HepG2 (cell line): ENCODE measurements at regions of chr21 and their contacts with region 1.

Region 1: GRCh38 chr21:34510148-34511142 is 1.6 kb downstream of the KCNE1 start:
- DNase-seq: peak; percentile 67
- ATAC-seq: peak; percentile 98
- H3K4me3 ChIP-seq: no peak overlapping the region
- H3K27ac ChIP-seq: no peak overlapping the region
- H3K4me1 ChIP-seq: peaks cover 6% of the 10 kb centered on the region; the same call in 1 of the 2 replicates
- H3K27me3 ChIP-seq: peaks cover 0 to 5% of the 10 kb centered on the region in 2 experiments; a peak in 1 of 5 replicates
- CTCF ChIP-seq: peak; percentile 99
- EP300 ChIP-seq: no peak
- POLR2A ChIP-seq: no peak
- RAD21 ChIP-seq: peak; percentile 96

Region 2: DNA sequence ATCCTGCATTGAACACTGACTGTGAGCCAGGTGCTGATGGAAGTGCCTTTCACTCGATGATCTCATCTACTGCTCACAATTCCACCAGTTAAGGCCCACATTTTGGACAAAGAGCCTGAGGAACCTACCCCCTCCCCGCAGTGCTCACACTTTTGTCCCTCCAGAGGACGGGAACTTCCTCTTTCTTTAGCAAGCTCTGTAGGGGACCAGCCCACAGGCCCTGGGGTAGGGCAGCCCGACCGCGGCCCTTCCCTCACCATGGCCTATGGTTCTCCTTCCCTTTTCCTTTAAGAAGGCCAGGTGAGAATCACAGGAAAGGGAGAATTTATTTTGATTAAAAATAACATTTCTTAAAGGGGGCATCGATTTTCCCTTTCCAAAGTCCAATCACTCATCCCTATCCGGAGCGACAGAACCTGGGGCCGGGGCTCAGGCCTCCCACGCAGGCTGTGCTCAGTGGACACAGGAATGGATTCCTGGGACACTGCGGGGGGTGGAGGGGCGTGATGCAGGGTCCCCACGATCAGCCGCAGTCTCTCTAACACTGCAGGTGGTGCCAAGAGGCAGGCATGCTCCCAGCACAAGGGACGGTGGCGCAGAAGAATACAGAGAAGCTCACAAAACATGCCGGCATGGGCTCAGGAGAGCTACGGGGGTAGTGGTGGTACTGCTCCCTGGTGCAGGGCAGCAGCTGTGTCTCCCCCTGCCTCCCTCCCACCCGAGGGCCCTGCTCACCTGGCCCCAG is 10.5 kb after region 1 on chr21:
- CTCF ChIA-PET with region 1: no interaction called
- POLR2A ChIA-PET with region 1: interaction called, 30 read pairs
- in situ Hi-C with region 1: no loop called
- intact Hi-C with region 1: no loop called
- DNase-seq: no peak
- ATAC-seq: no peak
- H3K4me3 ChIP-seq: 0 out of 6 replicates have a peak overlapping the region, but pooled peaks of 1 of the 3 experiments have one; percentile 57
- H3K27ac ChIP-seq: peak overlapping the region; percentile 85
- H3K4me1 ChIP-seq: peaks cover 57% of the 10 kb centered on the region
- H3K27me3 ChIP-seq: no peaks in the 10 kb centered on the region
- CTCF ChIP-seq: no peak
- EP300 ChIP-seq: no peak
- POLR2A ChIP-seq: no peak
- RAD21 ChIP-seq: no peak

Region 3: GRCh38 chr21:34545079-34545884 is 34.8 kb after region 1 on chr21:
- CTCF ChIA-PET with region 1: interaction called, 29 read pairs
- POLR2A ChIA-PET with region 1: interaction called, 12 read pairs
- in situ Hi-C with region 1: no loop called
- intact Hi-C with region 1: loop called (anchors 1 kb)
- DNase-seq: peak; percentile 62
- ATAC-seq: peak; percentile 90
- H3K4me3 ChIP-seq: peak overlapping the region; percentile 41 to 67 (median 56)
- H3K27ac ChIP-seq: peak overlapping the region; percentile 70
- H3K4me1 ChIP-seq: peaks cover 28% of the 10 kb centered on the region
- H3K27me3 ChIP-seq: no peaks in the 10 kb centered on the region
- CTCF ChIP-seq: 0 out of 2 replicates have a peak, but pooled peaks have one; percentile 9
- EP300 ChIP-seq: 0 out of 4 replicates have a peak, but pooled peaks of 1 of the 2 experiments have one; percentile 21
- POLR2A ChIP-seq: peak in 1 of 2 experiments; percentile 40; a peak in 2 of 4 replicates
- RAD21 ChIP-seq: no peak

Region 4: DNA sequence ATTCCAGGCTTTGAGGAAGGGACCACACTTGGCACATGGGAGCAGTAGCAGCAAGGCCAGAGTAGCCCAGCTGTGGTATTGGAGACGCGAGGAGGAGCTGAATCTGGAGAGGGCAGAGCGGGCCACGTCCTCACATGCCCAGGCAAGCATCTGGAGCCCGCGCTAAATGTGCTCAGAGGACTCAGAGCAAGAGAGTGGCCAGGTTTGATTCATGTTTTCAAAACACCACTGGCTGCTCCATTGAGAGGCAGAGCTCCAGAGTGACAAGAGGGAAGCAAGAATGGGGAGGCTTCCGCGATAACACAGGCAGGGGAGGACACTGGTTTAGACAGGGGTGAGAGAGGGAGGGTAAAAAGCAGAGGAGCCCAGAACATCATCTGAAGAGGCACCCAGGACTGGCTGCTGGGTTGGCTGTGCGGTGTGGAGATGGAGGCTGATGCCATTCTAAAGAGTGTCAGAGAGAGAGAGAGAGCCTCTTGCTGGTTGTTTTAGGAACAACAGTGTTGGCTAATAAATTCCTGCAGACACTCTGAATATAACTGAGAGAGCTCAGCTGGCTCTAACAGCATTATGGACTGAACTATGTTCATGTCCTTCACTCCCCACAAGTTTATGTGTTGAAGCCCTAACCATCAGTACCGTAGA is 72.2 kb after region 1 on chr21:
- CTCF ChIA-PET with region 1: interaction called, 15 read pairs
- POLR2A ChIA-PET with region 1: interaction called, 3 read pairs
- in situ Hi-C with region 1: no loop called
- intact Hi-C with region 1: loop called (anchors 1 kb)
- DNase-seq: peak; percentile 37
- ATAC-seq: peak; percentile 99
- H3K4me3 ChIP-seq: no peak overlapping the region
- H3K27ac ChIP-seq: no peak overlapping the region
- H3K4me1 ChIP-seq: peaks cover 9% of the 10 kb centered on the region
- H3K27me3 ChIP-seq: no peaks in the 10 kb centered on the region
- CTCF ChIP-seq: peak; percentile 78
- EP300 ChIP-seq: no peak
- POLR2A ChIP-seq: no peak
- RAD21 ChIP-seq: peak; percentile 74

Region 5: GRCh38 chr21:34603002-34603709 is 92.7 kb after region 1 on chr21:
- CTCF ChIA-PET with region 1: interaction called, 50 read pairs
- POLR2A ChIA-PET with region 1: interaction called, 5 read pairs
- in situ Hi-C with region 1: no loop called
- intact Hi-C with region 1: loop called (anchors 1 kb)
- DNase-seq: peak; percentile 59
- ATAC-seq: peak; percentile 100
- H3K4me3 ChIP-seq: no peak overlapping the region
- H3K27ac ChIP-seq: no peak overlapping the region
- H3K4me1 ChIP-seq: peaks cover 5% of the 10 kb centered on the region; the same call in 1 of the 2 replicates
- H3K27me3 ChIP-seq: no peaks in the 10 kb centered on the region
- CTCF ChIP-seq: peak; percentile 93
- EP300 ChIP-seq: no peak
- POLR2A ChIP-seq: no peak
- RAD21 ChIP-seq: peak; percentile 80

Region 6: DNA sequence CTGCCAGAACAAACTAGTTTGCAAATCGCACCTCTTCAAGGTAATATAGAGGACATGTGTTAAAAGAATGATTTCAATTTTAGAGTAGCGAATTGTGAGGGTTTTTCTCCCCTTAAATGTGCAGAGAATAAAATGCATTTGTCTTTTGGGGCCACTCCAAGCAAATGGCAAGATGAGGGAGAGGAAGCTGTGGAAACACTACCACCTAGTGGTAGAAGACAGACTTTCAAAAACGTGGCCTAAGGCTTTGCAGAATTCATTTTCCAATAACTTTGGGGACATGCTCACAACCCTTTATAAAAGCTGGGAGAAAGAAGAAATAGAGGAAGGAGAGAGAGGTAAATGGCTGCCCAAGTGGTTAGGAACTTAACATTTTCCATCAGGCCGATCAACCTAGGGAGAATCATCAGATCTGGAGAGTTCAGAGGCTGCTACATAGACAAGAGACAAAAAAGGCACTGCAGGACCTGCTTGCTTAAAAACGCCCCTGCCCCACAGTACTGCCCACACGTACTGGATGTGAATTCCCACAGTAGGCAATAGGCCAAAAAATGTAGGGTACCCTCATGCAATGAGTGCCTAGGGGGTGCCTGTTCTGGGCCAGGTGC is 120.2 kb after region 1 on chr21:
- CTCF ChIA-PET with region 1: interaction called, 10 read pairs
- POLR2A ChIA-PET with region 1: no interaction called
- in situ Hi-C with region 1: no loop called
- intact Hi-C with region 1: loop called (anchors 1 kb)
- DNase-seq: peak; percentile 44
- ATAC-seq: peak; percentile 80
- H3K4me3 ChIP-seq: no peak overlapping the region
- H3K27ac ChIP-seq: no peak overlapping the region
- H3K4me1 ChIP-seq: no peaks in the 10 kb centered on the region
- H3K27me3 ChIP-seq: peaks cover 0 to 11% of the 10 kb centered on the region in 2 experiments; a peak in 2 of 5 replicates
- CTCF ChIP-seq: peak; percentile 84
- EP300 ChIP-seq: no peak
- POLR2A ChIP-seq: no peak
- RAD21 ChIP-seq: peak; percentile 71